ENCODE measurements at regions of chr17 and their contacts with region 1.

Region 1: GRCh38 chr17:7484067-7484918 is at the start of gene POLR2A:
- DNase-seq: peak; percentile 99
- ATAC-seq: peak; percentile 66
- H3K4me3 Mint-ChIP-seq: peak within 1 kb of the TSS; percentile 98
- H3K27ac Mint-ChIP-seq: peak within 1 kb of the TSS; percentile 100
- H3K4me1 Mint-ChIP-seq: peaks cover 69% of the 10 kb centered on the region
- H3K27me3 Mint-ChIP-seq: no peaks in the 10 kb centered on the region
- CTCF ChIP-seq: no peak
- total RNA-seq, gene POLR2A: 148 and 162 TPM in 2 replicates

Region 2: DNA sequence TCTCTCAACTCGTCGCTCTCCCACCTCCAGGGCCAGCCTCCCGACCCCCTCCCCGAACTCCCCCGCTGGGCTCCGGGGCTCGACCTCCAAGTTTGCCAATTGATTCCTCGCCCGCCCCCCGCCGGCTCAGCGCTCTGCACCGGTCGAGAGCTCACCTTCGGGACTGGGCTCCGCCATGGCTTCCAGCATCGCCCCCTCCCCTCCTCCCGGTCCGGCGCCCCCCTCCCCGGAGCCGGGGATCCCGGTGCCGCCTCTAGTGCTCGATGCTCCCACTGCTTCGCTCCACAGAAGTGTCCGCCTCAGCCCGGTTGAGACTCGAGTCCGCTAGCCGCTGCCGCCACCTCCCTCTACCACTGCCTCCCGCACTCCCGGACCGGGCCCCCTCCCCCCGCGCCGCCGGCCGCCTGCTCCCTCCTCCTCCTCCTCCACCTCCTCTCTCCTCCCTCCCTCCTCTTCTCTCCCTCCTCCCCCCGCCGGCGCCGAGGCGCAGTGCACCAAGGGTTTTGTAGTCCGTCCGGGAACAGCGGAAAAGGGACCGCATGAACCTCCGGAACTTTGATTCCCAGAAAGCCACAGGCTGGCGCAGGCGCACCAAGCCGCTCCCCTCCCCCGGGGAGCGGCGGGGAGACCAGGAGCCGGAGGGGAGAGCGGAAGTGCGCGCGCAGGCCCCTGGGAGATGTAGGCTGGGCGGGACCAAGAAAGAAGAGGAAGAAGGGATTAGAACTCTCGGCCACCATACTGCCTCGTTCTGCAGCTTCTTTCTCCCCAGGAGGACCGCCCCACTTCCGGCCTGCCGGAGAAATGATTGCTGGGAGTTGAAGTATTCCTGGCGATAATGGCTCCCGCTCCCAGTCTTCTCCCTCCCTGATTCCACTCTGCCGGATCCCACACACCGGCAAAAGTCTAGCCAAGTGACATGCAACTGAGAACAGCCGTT is 244.9 kb before region 1 on chr17 and contains the start of gene PHF23:
- CTCF ChIA-PET with region 1: no interaction called
- POLR2A ChIA-PET with region 1: interaction called, 25 read pairs
- intact Hi-C with region 1: loop called (anchors 1 kb)
- DNase-seq: peak; percentile 93
- ATAC-seq: peak; percentile 64
- H3K4me3 Mint-ChIP-seq: peak within 1 kb of the TSS; percentile 99
- H3K27ac Mint-ChIP-seq: peak within 1 kb of the TSS; percentile 100
- H3K4me1 Mint-ChIP-seq: peaks cover 63% of the 10 kb centered on the region
- H3K27me3 Mint-ChIP-seq: no peaks in the 10 kb centered on the region
- CTCF ChIP-seq: no peak
- total RNA-seq, gene PHF23: 45.5 and 46.6 TPM in 2 replicates

Region 3: DNA sequence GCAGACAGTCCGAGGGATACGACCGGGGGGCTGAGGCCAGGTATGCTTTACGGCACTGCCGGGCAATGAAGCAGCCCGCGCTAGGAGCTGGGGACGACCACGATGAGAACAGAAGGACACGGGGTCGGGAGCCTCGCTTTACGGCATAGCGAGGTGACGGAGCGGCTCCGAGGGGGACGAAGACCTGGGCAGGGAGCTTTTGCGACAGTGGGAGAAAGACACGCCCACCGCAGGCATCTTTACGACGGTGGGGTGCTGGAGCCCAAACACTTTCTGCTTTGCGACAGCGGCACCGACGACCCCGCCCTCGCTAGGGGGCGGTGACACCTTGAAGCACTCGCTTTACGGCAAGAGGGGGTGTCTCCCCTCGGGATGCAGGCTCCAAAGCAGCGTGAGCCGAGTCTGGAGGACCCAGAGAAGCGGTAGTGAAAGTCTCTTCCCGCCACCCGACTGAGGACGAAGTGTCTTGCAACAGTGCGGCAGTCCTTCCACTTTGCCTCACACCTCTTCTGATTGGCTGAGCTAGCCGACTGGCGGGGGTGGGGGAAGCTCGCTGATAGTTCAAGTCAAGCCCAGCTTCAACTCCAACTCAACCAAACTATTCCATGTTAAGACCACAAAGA is 154.8 kb before region 1 on chr17:
- CTCF ChIA-PET with region 1: no interaction called
- POLR2A ChIA-PET with region 1: interaction called, 13 read pairs
- intact Hi-C with region 1: loop called (anchors 1 kb)
- DNase-seq: peak; percentile 92
- ATAC-seq: peak; percentile 74
- H3K4me3 Mint-ChIP-seq: peak overlapping the region; percentile 95
- H3K27ac Mint-ChIP-seq: peak overlapping the region; percentile 96
- H3K4me1 Mint-ChIP-seq: peaks cover 41% of the 10 kb centered on the region
- H3K27me3 Mint-ChIP-seq: no peaks in the 10 kb centered on the region
- CTCF ChIP-seq: no peak

Region 4: GRCh38 chr17:7394452-7395191 is 89.7 kb before region 1 on chr17 and contains the start of gene PLSCR3:
- CTCF ChIA-PET with region 1: no interaction called
- POLR2A ChIA-PET with region 1: interaction called, 9 read pairs
- intact Hi-C with region 1: loop called (anchors 2 kb)
- DNase-seq: peak; percentile 94
- ATAC-seq: peak; percentile 88
- H3K4me3 Mint-ChIP-seq: peak within 1 kb of the TSS; percentile 91
- H3K27ac Mint-ChIP-seq: peak within 1 kb of the TSS; percentile 85
- H3K4me1 Mint-ChIP-seq: peaks cover 15% of the 10 kb centered on the region
- H3K27me3 Mint-ChIP-seq: no peaks in the 10 kb centered on the region
- CTCF ChIP-seq: no peak
- total RNA-seq, gene PLSCR3: 31.7 and 35.2 TPM in 2 replicates

Region 5: GRCh38 chr17:7454980-7455379 is 29.3 kb before region 1 on chr17:
- CTCF ChIA-PET with region 1: interaction called, 3 read pairs
- POLR2A ChIA-PET with region 1: interaction called, 45 read pairs
- intact Hi-C with region 1: loop called (anchors 1 kb)
- DNase-seq: no peak
- ATAC-seq: no peak
- H3K4me3 Mint-ChIP-seq: peak overlapping the region; percentile 94
- H3K27ac Mint-ChIP-seq: peak overlapping the region; percentile 88
- H3K4me1 Mint-ChIP-seq: peaks cover 12% of the 10 kb centered on the region
- H3K27me3 Mint-ChIP-seq: peaks cover 4% of the 10 kb centered on the region
- CTCF ChIP-seq: no peak

Region 6: DNA sequence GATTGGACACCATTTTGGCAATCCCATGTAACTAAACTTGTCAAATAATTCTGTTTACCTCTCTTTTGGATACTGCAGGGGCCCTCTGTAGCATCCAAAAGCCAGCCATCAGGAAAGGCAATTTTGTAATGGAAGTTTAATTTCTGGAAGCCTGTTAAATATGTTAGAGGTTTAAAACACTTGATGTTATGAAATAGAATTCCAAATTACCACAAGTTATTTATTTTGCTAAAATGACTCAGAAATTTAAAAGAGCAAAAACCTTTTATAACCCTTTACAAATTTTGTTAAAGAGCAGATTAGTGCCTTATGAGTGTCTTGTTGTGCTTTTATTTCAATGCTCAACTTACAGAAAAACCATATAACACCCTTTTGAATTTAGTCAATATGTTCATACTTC is 44.5 kb after region 1 on chr17:
- CTCF ChIA-PET with region 1: no interaction called
- POLR2A ChIA-PET with region 1: no interaction called
- intact Hi-C with region 1: no loop called
- DNase-seq: no peak
- ATAC-seq: no peak
- H3K4me3 Mint-ChIP-seq: no peak overlapping the region
- H3K27ac Mint-ChIP-seq: no peak overlapping the region
- H3K4me1 Mint-ChIP-seq: no peaks in the 10 kb centered on the region
- H3K27me3 Mint-ChIP-seq: no peaks in the 10 kb centered on the region
- CTCF ChIP-seq: no peak

Region 7: GRCh38 chr17:7538891-7539290 is 54.6 kb after region 1 on chr17:
- CTCF ChIA-PET with region 1: no interaction called
- POLR2A ChIA-PET with region 1: no interaction called
- intact Hi-C with region 1: no loop called
- DNase-seq: no peak
- ATAC-seq: no peak
- H3K4me3 Mint-ChIP-seq: no peak overlapping the region
- H3K27ac Mint-ChIP-seq: no peak overlapping the region
- H3K4me1 Mint-ChIP-seq: no peaks in the 10 kb centered on the region
- H3K27me3 Mint-ChIP-seq: no peaks in the 10 kb centered on the region
- CTCF ChIP-seq: no peak

Region 8: GRCh38 chr17:7583253-7584109 is 99.2 kb after region 1 on chr17 and contains the start of gene MPDU1:
- CTCF ChIA-PET with region 1: no interaction called
- POLR2A ChIA-PET with region 1: interaction called, 36 read pairs
- intact Hi-C with region 1: loop called (anchors 1 kb)
- DNase-seq: peak; percentile 90
- ATAC-seq: peak; percentile 76
- H3K4me3 Mint-ChIP-seq: peak within 1 kb of the TSS; percentile 100
- H3K27ac Mint-ChIP-seq: peak within 1 kb of the TSS; percentile 100
- H3K4me1 Mint-ChIP-seq: peaks cover 64% of the 10 kb centered on the region
- H3K27me3 Mint-ChIP-seq: no peaks in the 10 kb centered on the region
- CTCF ChIP-seq: no peak
- total RNA-seq, gene MPDU1: 50.7 and 58.9 TPM in 2 replicates